Ascending aorta (tissue), 2 donors: ENCODE measurements at regions of chr9 and their contacts with region 1.

Region 1: DNA sequence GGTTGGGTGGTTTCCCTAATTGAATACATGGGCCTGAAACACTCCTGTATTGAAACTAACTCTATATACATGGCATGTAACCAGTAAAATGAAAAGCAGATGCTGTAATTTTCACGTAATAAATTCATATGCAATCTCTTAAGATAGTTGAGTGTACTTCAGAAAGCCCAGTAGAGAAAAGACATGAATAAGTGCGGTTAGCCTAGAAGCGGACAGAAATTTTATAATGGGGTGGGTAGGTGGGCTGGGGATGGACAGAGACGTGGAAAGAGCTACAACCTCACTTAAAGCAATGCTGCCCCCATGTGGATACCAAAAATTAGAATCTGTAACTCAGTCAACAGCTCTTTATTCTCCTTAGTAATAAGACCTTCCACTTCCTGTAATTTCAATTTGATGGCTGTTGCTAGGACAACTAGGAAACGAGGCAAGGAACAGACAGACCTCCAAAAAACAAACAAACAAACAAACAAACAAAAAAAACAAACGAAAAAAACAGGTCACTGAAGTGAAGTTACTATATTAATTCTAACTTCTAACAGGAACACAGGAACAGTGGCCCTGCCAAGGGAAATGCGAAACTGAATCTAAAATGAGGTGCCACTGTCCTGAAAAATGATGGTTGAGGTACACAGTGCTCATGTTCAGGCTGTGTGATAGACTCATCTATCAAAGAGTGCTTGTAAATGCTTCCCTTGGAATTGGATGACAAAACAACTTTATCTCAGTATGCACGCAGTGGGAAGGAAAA is 103.4 kb upstream of the GNA14 start:
- DNase-seq: no peak
- H3K4me3 ChIP-seq: no peak overlapping the region
- H3K27ac ChIP-seq: peak overlapping the region; percentile 41 to 43
- H3K4me1 ChIP-seq: peaks cover 4 to 8% of the 10 kb centered on the region in 2 donors
- H3K27me3 ChIP-seq: no peaks in the 10 kb centered on the region
- CTCF ChIP-seq: peak; percentile 35 to 60 (median 42)

Region 2: GRCh38 chr9:77433675-77434445 is 317.7 kb before region 1 on chr9:
- intact Hi-C with region 1: loop called (anchors 5 kb)
- DNase-seq: peak in 1 of 2 donors; percentile 76
- H3K4me3 ChIP-seq: no peak overlapping the region
- H3K27ac ChIP-seq: no peak overlapping the region
- H3K4me1 ChIP-seq: no peaks in the 10 kb centered on the region
- H3K27me3 ChIP-seq: no peaks in the 10 kb centered on the region
- CTCF ChIP-seq: peak; percentile 65 to 93 (median 93)

Region 3: DNA sequence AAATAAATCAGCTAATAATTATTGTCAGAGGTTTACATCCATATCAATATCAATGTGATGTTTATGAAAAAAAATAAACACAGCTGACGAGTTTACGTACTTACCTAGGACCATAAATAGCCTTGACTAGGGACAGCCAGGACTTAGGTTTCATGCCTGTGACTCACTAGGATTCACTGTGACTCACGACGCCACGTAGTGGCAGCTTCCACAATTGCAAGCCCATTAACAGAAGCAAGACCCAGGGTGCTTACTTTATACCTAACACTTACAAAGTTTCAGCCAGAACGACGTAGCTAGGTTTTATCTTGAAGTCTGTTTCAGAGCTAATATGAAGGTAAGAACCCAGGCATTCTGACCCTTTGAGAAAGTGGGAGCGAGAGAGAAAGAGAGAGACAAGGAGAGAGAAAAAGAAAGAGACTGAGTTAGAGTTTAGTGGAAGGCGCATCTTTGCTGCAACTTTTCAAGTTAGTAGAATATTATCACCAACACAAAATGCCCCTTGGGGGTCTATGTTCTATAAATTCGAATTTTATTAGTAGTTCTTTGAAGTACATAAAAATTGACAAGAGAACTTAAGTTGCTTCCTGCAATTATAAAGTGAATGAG is 294.6 kb before region 1 on chr9:
- intact Hi-C with region 1: loop called (anchors 2 kb)
- DNase-seq: peak; percentile 25 to 92
- H3K4me3 ChIP-seq: no peak overlapping the region
- H3K27ac ChIP-seq: no peak overlapping the region
- H3K4me1 ChIP-seq: peaks cover 0 to 3% of the 10 kb centered on the region in 2 donors
- H3K27me3 ChIP-seq: no peaks in the 10 kb centered on the region
- CTCF ChIP-seq: peak; percentile 55 to 87 (median 87)

Region 4: DNA sequence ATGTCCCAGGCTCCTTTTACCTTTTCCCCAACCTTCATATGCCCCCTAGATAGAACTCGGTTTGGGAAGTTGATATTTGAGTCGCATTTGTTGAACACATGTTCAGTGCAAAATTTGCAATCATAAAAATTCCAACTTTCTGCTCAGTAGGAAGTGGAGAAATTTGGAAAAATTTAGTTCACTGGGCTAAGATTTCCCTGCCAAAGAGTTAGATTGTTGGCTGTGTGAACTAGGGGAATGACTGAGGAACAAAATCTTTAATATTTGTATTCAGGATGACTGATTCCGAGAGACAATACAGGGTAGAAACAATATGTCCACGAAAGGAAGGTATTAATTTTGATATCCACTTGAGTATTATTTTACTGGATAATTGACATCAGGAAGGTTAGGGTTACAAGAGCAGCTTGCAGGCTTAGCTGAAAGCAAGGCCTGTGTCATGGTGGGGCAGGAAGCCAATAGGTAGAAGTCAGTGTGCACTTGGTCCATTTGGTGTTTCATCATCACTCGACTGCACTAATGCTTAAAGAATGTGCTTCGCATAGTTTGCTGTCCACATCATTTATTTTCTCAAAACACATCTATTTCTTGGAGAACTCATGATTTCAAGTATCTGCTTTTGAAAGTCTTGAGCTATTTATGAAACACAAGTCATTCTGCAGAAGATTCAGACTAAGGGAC is 44.0 kb before region 1 on chr9:
- intact Hi-C with region 1: loop called (anchors 2 kb)
- DNase-seq: peak in 1 of 2 donors; percentile 93
- H3K4me3 ChIP-seq: no peak overlapping the region
- H3K27ac ChIP-seq: peak overlapping the region; percentile 54 to 69
- H3K4me1 ChIP-seq: peaks cover 0 to 13% of the 10 kb centered on the region in 2 donors
- H3K27me3 ChIP-seq: no peaks in the 10 kb centered on the region
- CTCF ChIP-seq: no peak